HepG2 (cell line): ENCODE measurements at regions of chr7 and their contacts with region 1.

Region 1: GRCh38 chr7:74061840-74062539 is 21.6 kb upstream of the LIMK1 start:
- DNase-seq: peak; percentile 78
- ATAC-seq: peak; percentile 67
- H3K4me3 ChIP-seq: peak overlapping the region in 2 of 3 experiments; percentile 57 to 65; a peak in 4 of 6 replicates
- H3K27ac ChIP-seq: no peak overlapping the region
- H3K4me1 ChIP-seq: peaks cover 39% of the 10 kb centered on the region
- H3K27me3 ChIP-seq: peaks cover 4 to 18% of the 10 kb centered on the region in 2 experiments; a peak in 4 of 5 replicates
- CTCF ChIP-seq: no peak
- EP300 ChIP-seq: no peak
- POLR2A ChIP-seq: peak in 1 of 2 experiments; percentile 53; a peak in 1 of 4 replicates
- RAD21 ChIP-seq: no peak

Region 2: GRCh38 chr7:74012842-74013249 is 49.1 kb before region 1 on chr7:
- CTCF ChIA-PET with region 1: no interaction called
- POLR2A ChIA-PET with region 1: no interaction called
- in situ Hi-C with region 1: no loop called
- intact Hi-C with region 1: no loop called
- DNase-seq: no peak
- ATAC-seq: peak; percentile 73
- H3K4me3 ChIP-seq: no peak overlapping the region
- H3K27ac ChIP-seq: no peak overlapping the region
- H3K4me1 ChIP-seq: peaks cover 13% of the 10 kb centered on the region
- H3K27me3 ChIP-seq: peaks cover 4 to 20% of the 10 kb centered on the region in 2 experiments; a peak in 3 of 5 replicates
- CTCF ChIP-seq: no peak
- EP300 ChIP-seq: no peak
- POLR2A ChIP-seq: no peak
- RAD21 ChIP-seq: no peak

Region 3: DNA sequence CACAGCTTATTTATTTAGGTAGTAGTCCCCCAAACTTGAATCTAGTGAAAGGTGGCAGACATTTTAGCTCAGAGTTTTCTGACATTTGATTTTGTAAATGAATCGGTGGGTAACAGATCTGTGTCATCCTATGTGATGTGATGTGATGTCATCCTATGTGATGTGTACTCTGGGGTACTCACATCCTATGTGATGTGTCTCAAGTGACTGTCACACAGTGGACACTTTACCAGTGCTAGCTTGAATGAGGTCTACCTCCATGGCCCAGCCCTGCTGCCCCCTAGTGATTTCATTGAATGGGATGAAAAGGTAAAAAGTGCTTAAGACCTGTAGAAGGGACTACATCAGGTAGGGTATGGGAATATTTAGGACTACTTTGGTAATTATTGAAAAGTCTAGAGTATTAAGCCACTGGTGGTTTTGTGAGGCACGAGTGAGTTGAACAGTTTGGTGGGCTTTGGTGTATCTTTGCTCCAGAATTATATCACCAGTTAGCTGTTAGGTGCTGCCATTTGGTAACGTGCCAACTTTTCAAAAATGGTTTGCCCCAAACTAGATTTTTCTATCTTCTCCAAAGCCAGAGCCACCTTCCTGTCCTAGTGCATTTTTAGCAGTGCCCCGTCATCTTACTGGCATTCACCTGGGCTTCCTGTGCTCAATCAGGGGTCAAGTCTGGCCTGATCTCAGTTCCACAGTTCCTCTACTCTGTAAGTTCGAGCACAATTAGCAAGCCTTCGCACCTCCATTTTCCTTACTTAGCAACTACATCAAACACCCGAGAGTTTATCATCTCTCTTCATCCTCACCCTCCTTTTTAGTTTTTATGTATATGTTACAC is 121.8 kb after region 1 on chr7:
- CTCF ChIA-PET with region 1: no interaction called
- POLR2A ChIA-PET with region 1: no interaction called
- in situ Hi-C with region 1: no loop called
- intact Hi-C with region 1: loop called (anchors 1 kb)
- DNase-seq: peak; percentile 54
- ATAC-seq: peak; percentile 77
- H3K4me3 ChIP-seq: no peak overlapping the region
- H3K27ac ChIP-seq: no peak overlapping the region
- H3K4me1 ChIP-seq: peaks cover 35% of the 10 kb centered on the region
- H3K27me3 ChIP-seq: no peaks in the 10 kb centered on the region
- CTCF ChIP-seq: peak; percentile 54
- EP300 ChIP-seq: no peak
- POLR2A ChIP-seq: peak in 1 of 2 experiments; percentile 19; a peak in 1 of 4 replicates
- RAD21 ChIP-seq: peak; percentile 21; the same call in 1 of the 2 replicates

Region 4: GRCh38 chr7:74401137-74401859 is 339.3 kb after region 1 on chr7:
- CTCF ChIA-PET with region 1: no interaction called
- POLR2A ChIA-PET with region 1: no interaction called
- in situ Hi-C with region 1: loop called (anchors 10 kb)
- intact Hi-C with region 1: no loop called
- DNase-seq: peak; percentile 49
- ATAC-seq: peak; percentile 66
- H3K4me3 ChIP-seq: no peak overlapping the region
- H3K27ac ChIP-seq: no peak overlapping the region
- H3K4me1 ChIP-seq: no peaks in the 10 kb centered on the region
- H3K27me3 ChIP-seq: no peaks in the 10 kb centered on the region
- CTCF ChIP-seq: peak; percentile 92
- EP300 ChIP-seq: no peak
- POLR2A ChIP-seq: no peak
- RAD21 ChIP-seq: peak; percentile 90